Gastrocnemius medialis (tissue), 4 donors: ENCODE measurements at regions of chr11 and their contacts with region 1.

Region 1: DNA sequence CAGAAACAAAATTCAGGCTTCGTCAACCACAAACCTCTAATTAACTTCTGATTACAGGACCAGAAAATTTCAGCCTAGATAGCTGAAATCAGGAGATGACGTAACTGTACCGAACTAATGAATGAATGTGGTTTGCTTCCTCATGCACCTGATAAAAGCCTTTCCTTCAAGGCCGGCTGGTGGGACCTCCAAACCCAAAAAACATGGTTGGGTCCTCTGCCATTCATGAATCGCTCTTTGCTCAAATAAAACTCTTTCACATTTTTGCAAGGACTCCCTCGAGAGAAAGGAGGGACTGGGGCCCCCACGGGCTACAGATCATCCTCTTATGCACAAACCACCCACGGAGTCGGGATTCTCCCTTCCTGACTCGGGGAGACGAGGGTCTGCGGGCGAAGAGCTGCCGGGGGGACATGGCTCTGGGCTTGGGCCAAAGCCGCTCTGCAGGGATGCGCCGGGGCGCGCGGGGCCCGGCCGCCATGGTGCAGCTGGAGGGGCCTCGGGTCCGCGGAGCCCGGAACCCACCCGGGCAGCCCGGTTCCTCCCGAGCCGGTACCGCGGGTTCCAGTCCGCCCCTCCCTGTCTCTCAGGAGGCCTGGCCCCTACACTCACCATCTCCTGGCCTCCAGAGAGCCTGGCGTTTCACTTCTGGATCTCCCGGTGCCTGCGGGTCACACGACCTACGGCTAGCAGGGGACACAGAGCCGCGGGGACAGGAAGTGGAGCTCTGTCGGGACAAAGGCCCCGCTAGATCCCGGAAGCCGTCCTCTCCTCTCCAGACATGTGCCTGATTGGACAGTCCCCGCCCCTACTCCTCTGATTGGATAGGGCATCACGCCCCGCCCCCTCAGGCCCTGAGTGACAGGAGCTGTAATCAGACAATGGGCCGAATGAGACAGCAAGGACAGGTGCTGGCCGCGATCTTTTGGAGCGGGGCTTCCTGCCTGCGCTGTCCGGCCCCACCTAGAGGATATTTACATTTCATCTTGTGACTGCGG is at the start of gene ZNF195:
- DNase-seq: peak; percentile 98 to 99
- ATAC-seq: peak; percentile 100
- H3K4me3 ChIP-seq: peak within 1 kb of the TSS; percentile 75 to 98 (median 88)
- H3K27ac ChIP-seq: peak within 1 kb of the TSS; percentile 79 to 90 (median 89)
- H3K4me1 ChIP-seq: peaks cover 22 to 29% of the 10 kb centered on the region in 2 donors
- H3K27me3 ChIP-seq: no peaks in the 10 kb centered on the region
- CTCF ChIP-seq: peak in 1 of 5 experiments; percentile 9
- POLR2A ChIP-seq: peak; percentile 58
- total RNA-seq, gene ZNF195: 4.8 to 23.4 (median 8.3) TPM

Region 2: GRCh38 chr11:3146612-3147256 is 232.0 kb before region 1 on chr11:
- in situ Hi-C with region 1: no loop called
- intact Hi-C with region 1: no loop called
- DNase-seq: no peak
- ATAC-seq: peak; percentile 63 to 80
- H3K4me3 ChIP-seq: no peak overlapping the region
- H3K27ac ChIP-seq: peak overlapping the region; percentile 59 to 75 (median 70)
- H3K4me1 ChIP-seq: peaks cover 20 to 24% of the 10 kb centered on the region in 2 donors
- H3K27me3 ChIP-seq: no peaks in the 10 kb centered on the region
- CTCF ChIP-seq: no peak
- POLR2A ChIP-seq: no peak

Region 3: GRCh38 chr11:3160252-3161031 is 218.3 kb before region 1 on chr11:
- in situ Hi-C with region 1: no loop called
- intact Hi-C with region 1: loop called (anchors 5 kb)
- DNase-seq: peak; percentile 68 to 78
- ATAC-seq: peak; percentile 71 to 74
- H3K4me3 ChIP-seq: peak overlapping the region; percentile 57 to 68 (median 64)
- H3K27ac ChIP-seq: peak overlapping the region; percentile 71 to 81 (median 80)
- H3K4me1 ChIP-seq: peaks cover 59 to 67% of the 10 kb centered on the region in 2 donors
- H3K27me3 ChIP-seq: no peaks in the 10 kb centered on the region
- CTCF ChIP-seq: no peak
- POLR2A ChIP-seq: no peak